AG04450 (cell line): ENCODE measurements at regions of chr12 and their contacts with region 1.

Region 1: DNA sequence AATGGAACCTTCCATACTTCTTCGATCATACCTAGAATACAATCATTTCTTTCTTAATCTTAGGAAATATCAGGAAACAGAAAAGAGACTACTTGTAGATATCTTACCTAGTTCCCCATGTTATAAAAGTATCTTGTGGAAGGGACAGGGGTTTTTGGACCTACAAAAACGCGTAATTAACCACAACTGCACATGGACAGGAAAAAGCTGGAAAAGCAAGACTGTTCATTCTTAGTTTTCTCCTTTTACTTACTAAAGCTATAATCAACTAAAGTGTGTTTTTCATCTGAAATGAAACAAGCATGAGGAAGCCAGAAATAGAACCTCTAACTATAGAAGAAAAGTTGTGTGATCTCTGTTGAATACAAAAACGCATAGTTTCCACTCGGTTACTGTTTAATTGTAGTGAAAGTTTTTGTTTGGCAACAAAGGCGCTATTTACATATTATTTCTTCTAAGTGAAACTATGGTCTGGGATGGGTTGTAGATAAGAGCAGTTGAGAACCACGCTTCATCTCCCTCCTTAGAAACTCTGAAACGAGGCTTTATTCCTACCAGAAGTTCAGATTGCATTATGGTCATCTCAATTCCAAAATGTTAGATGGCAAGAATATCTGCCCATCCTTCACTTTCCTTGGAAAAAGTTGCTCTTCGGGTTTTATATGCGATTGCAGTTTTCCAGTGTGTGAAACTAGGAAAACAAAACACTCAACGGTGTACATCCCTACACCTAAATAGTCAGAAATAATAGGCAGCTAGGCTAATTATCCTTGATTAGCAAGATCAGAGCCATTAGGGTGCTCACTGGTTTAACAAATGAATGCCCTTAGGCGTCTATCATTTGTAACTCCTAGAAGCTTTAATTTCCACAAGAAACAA is 1.1 kb downstream of the BCAT1 start:
- DNase-seq: no peak
- H3K4me3 ChIP-seq: peak overlapping the region; percentile 86
- H3K27ac ChIP-seq: peak overlapping the region; percentile 92
- H3K27me3 ChIP-seq: no peaks in the 10 kb centered on the region
- CTCF ChIP-seq: no peak

Region 2: DNA sequence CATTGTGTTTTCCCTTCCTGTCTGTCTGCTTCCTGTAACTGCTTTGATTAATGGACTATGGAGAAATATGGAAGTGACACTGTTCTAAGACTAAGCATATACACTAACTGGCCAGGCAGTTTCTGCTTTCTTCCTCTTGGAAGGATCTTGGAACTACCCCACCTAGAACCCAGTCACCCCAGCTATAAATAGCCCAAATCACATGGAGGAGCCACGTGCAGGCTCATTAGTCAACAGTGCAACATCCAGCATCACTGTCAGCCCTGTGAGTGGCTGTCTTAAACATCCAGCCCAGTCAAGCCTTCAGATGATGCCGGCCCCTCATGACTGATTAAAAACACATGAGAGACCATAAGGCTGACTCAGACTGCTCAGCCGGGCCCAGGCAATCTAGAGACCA is 38.1 kb before region 1 on chr12:
- CTCF ChIA-PET with region 1: no interaction called
- POLR2A ChIA-PET with region 1: interaction called, 24 read pairs
- DNase-seq: peak; percentile 83
- H3K4me3 ChIP-seq: no peak overlapping the region
- H3K27ac ChIP-seq: peak overlapping the region; percentile 73
- H3K27me3 ChIP-seq: no peaks in the 10 kb centered on the region
- CTCF ChIP-seq: no peak